Activated naive CD4-positive, alpha-beta T cell treated with anti-CD3 and anti-CD28 coated beads for 36 hours (primary cell): ENCODE measurements at regions of chr7 and their contacts with region 1.

Region 1: GRCh38 chr7:140326116-140326928 is 72.0 kb downstream of the SLC37A3 start:
- DNase-seq: peak; percentile 76
- H3K4me3 Mint-ChIP-seq: no peak overlapping the region
- H3K27ac Mint-ChIP-seq: no peak overlapping the region
- H3K4me1 Mint-ChIP-seq: no peaks in the 10 kb centered on the region
- H3K27me3 Mint-ChIP-seq: no peaks in the 10 kb centered on the region

Region 2: DNA sequence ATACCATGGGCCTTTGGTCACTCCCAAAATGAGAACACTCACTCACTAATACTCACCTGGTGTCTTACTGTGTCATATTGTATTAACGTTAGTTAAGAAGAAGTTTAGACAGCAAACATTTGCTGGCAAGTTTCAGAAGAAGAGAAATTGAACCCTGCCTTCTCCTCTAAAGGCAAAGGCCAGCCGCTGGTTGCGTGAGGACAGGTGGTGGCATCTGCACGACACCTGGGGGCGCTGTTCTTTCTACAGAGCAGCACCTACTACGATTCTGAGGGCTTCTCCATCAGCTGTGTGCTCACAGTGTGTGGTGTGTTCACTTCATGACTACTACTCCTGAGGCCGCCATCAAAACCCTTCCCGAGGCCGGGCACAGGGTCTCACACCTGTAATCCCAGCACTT is 820.8 kb before region 1 on chr7:
- CTCF ChIA-PET with region 1: no interaction called
- intact Hi-C with region 1: loop called (anchors 5 kb)
- DNase-seq: peak; percentile 50
- H3K4me3 Mint-ChIP-seq: no peak overlapping the region
- H3K27ac Mint-ChIP-seq: no peak overlapping the region
- H3K4me1 Mint-ChIP-seq: no peaks in the 10 kb centered on the region
- H3K27me3 Mint-ChIP-seq: no peaks in the 10 kb centered on the region

Region 3: GRCh38 chr7:140062528-140063299 is 263.6 kb before region 1 on chr7 and contains the start of gene PARP12:
- CTCF ChIA-PET with region 1: interaction called, 3 read pairs
- intact Hi-C with region 1: loop called (anchors 5 kb)
- DNase-seq: peak; percentile 76
- H3K4me3 Mint-ChIP-seq: peak within 1 kb of the TSS; percentile 81
- H3K27ac Mint-ChIP-seq: no peak within 1 kb of the TSS
- H3K4me1 Mint-ChIP-seq: peaks cover 35% of the 10 kb centered on the region
- H3K27me3 Mint-ChIP-seq: no peaks in the 10 kb centered on the region
- total RNA-seq, gene PARP12: 25.2 to 25.3 TPM

Region 4: DNA sequence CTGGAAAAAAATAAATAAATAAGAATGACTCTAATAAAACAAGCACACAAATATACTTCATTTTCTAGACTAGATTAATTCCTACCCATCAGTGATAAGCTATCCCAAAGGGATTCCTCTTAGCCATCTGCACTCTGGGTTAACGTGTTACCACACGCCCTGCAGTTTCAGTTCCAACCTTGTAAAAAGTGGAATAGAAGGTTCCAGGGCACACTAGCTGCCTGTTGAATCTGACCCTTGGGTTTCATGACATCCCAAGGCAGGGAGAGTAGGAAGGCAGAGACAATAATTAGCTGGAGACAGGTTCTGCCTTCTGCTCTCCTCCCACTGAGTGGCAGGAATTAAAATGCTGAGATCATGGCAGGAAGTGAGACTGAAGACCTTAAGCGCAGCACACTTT is 38.5 kb after region 1 on chr7:
- CTCF ChIA-PET with region 1: no interaction called
- intact Hi-C with region 1: no loop called
- DNase-seq: no peak
- H3K4me3 Mint-ChIP-seq: no peak overlapping the region
- H3K27ac Mint-ChIP-seq: no peak overlapping the region
- H3K4me1 Mint-ChIP-seq: peaks cover 7% of the 10 kb centered on the region
- H3K27me3 Mint-ChIP-seq: no peaks in the 10 kb centered on the region